ENCODE measurements at regions of chr1 and their contacts with region 1.

Region 1: GRCh38 chr1:154335025-154335714 is 9.8 kb downstream of the ATP8B2 start:
- DNase-seq: peak; percentile 86 to 88
- H3K4me3 ChIP-seq: no peak overlapping the region
- H3K4me3 Mint-ChIP-seq: peak overlapping the region; percentile 61
- H3K27ac Mint-ChIP-seq: peak overlapping the region; percentile 61
- H3K4me1 ChIP-seq: peaks cover 7% of the 10 kb centered on the region
- H3K4me1 Mint-ChIP-seq: peaks cover 32% of the 10 kb centered on the region
- H3K27me3 ChIP-seq: no peaks in the 10 kb centered on the region
- H3K27me3 Mint-ChIP-seq: no peaks in the 10 kb centered on the region
- CTCF ChIP-seq: peak; percentile 88 to 89

Region 2: GRCh38 chr1:154198756-154199562 is 136.2 kb before region 1 on chr1:
- CTCF ChIA-PET with region 1: interaction called, 14 read pairs
- POLR2A ChIA-PET with region 1: no interaction called
- intact Hi-C with region 1: no loop called
- DNase-seq: peak; percentile 47 to 54
- H3K4me3 ChIP-seq: no peak overlapping the region
- H3K4me3 Mint-ChIP-seq: no peak overlapping the region
- H3K27ac Mint-ChIP-seq: no peak overlapping the region
- H3K4me1 ChIP-seq: 0 out of 2 replicates have a peak, but pooled peaks cover 3% of the 10 kb centered on the region
- H3K4me1 Mint-ChIP-seq: peaks cover 7% of the 10 kb centered on the region
- H3K27me3 ChIP-seq: no peaks in the 10 kb centered on the region
- H3K27me3 Mint-ChIP-seq: no peaks in the 10 kb centered on the region
- CTCF ChIP-seq: peak; percentile 62 to 63